ENCODE measurements at regions of chrX and their contacts with region 1.

Region 1: DNA sequence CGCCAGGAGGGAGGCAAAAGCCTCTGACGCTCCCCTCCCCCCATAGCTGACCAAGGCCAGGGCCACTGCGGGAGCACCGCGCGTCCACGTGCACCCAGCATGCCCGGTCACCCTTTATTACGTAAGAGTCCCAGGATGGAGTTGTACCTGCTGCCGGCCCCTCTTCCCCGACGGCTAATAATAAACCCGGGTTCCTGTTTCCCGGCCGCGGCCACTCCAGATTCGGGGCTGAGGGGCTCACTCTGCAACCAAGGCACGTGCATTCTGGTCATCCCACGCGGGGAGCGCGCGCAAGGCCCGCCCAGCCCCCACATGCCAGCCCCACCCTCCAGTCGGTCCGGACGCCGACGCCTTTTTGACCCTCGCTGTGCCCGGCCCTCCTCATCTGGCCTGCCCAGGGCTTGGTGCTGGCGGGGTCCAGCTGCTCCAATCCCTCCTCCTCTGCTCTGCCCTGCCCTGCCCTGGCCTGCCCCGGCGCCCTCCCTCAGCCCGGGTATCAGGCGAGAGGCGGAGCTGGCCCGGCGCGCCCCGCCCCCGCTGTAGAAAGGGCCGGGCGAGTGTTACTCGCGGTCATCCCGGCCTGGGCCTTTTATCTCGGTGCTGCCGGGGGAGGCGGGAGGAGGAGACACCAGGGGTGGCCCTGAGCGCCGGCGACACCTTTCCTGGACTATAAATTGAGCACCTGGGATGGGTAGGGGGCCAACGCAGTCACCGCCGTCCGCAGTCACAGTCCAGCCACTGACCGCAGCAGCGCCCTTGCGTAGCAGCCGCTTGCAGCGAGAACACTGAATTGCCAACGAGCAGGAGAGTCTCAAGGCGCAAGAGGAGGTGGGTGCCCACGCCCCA is 2.5 kb downstream of the MID1IP1 start:
- DNase-seq: peak; percentile 77 to 86
- ATAC-seq: peak; percentile 81 to 94 (median 84)
- H3K4me3 ChIP-seq: peak overlapping the region; percentile 63 to 77 (median 70)
- H3K27ac ChIP-seq: peak overlapping the region; percentile 89 to 96 (median 95)
- H3K4me1 ChIP-seq: peaks cover 0 to 47% (median 26%) of the 10 kb centered on the region in 9 donors
- H3K27me3 ChIP-seq: no peaks in the 10 kb centered on the region
- CTCF ChIP-seq: no peak

Region 2: DNA sequence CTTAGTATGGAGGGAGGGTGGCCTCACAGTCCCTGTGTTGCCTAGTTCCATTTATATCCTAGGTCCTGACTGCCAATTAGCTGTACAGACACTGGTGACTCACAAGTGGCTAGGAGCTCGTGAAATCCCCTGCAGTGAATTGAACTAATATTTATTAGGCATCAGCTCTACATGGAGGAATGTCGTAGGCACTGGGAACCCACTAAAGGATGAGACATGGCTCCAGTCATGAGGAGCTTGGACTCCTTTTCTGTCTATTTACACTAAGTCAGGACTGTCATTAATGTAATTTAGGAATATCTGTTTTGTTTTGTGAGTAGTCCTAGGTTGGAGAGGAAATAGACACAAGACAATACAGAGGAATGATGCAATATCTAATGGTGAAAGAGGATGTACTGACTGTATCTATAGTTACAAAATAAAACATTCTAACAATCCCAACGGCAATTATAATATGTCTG is 65.2 kb after region 1 on chrX:
- intact Hi-C with region 1: loop called in 1 of 10 experiments (anchors 5 kb)
- DNase-seq: no peak
- ATAC-seq: peak; percentile 50 to 93 (median 84)
- H3K4me3 ChIP-seq: no peak overlapping the region
- H3K27ac ChIP-seq: peak overlapping the region in 7 of 10 donors; percentile 15 to 77 (median 35)
- H3K4me1 ChIP-seq: peaks cover 0 to 24% (median 4%) of the 10 kb centered on the region in 9 donors
- H3K27me3 ChIP-seq: peaks cover 0 to 4% (median 0%) of the 10 kb centered on the region in 7 donors
- CTCF ChIP-seq: no peak

Region 3: GRCh38 chrX:39309018-39309635 is 505.3 kb after region 1 on chrX:
- intact Hi-C with region 1: no loop called
- DNase-seq: no peak
- ATAC-seq: peak in 4 of 8 donors; percentile 14 to 63 (median 58)
- H3K4me3 ChIP-seq: no peak overlapping the region
- H3K27ac ChIP-seq: peak overlapping the region in 4 of 10 donors; percentile 2 to 50 (median 44)
- H3K4me1 ChIP-seq: peaks cover 0 to 25% (median 12%) of the 10 kb centered on the region in 9 donors
- H3K27me3 ChIP-seq: peaks cover 0 to 16% (median 0%) of the 10 kb centered on the region in 7 donors
- CTCF ChIP-seq: no peak

Measured in heart right ventricle (tissue), 16 donors.